ENCODE measurements at regions of chr5 and their contacts with region 1.

Region 1: GRCh38 chr5:131417240-131417869 is 153.5 kb downstream of the CDC42SE2 start:
- DNase-seq: peak; percentile 61 to 78 (median 74)
- ATAC-seq: peak; percentile 81
- H3K4me3 ChIP-seq: no peak overlapping the region
- H3K4me3 Mint-ChIP-seq: peak overlapping the region in 7 of 10 donors; percentile 27 to 70 (median 45)
- H3K27ac ChIP-seq: peak overlapping the region; percentile 23
- H3K27ac Mint-ChIP-seq: peak overlapping the region; percentile 68 to 95 (median 81)
- H3K4me1 ChIP-seq: peaks cover 8 to 14% of the 10 kb centered on the region in 2 donors
- H3K4me1 Mint-ChIP-seq: peaks cover 17 to 52% (median 46%) of the 10 kb centered on the region in 7 donors
- H3K27me3 ChIP-seq: no peaks in the 10 kb centered on the region
- H3K27me3 Mint-ChIP-seq: no peaks in the 10 kb centered on the region

Region 2: GRCh38 chr5:131394128-131394527 is 23.2 kb before region 1 on chr5:
- CTCF ChIA-PET with region 1: interaction called, 11 read pairs
- POLR2A ChIA-PET with region 1: interaction called, 4 read pairs
- intact Hi-C with region 1: loop called (anchors 1 kb)
- DNase-seq: peak in 8 of 9 donors; percentile 36 to 84 (median 77)
- ATAC-seq: peak; percentile 97
- H3K4me3 ChIP-seq: no peak overlapping the region
- H3K4me3 Mint-ChIP-seq: peak overlapping the region in 9 of 10 donors; percentile 30 to 85 (median 69)
- H3K27ac ChIP-seq: peak overlapping the region; percentile 84
- H3K27ac Mint-ChIP-seq: peak overlapping the region; percentile 88 to 97 (median 91)
- H3K4me1 ChIP-seq: peaks cover 59 to 61% of the 10 kb centered on the region in 2 donors
- H3K4me1 Mint-ChIP-seq: peaks cover 28 to 95% (median 84%) of the 10 kb centered on the region in 7 donors
- H3K27me3 ChIP-seq: no peaks in the 10 kb centered on the region
- H3K27me3 Mint-ChIP-seq: no peaks in the 10 kb centered on the region